GM13976 (cell line): ENCODE measurements at regions of chr20 and their contacts with region 1.

Region 1: DNA sequence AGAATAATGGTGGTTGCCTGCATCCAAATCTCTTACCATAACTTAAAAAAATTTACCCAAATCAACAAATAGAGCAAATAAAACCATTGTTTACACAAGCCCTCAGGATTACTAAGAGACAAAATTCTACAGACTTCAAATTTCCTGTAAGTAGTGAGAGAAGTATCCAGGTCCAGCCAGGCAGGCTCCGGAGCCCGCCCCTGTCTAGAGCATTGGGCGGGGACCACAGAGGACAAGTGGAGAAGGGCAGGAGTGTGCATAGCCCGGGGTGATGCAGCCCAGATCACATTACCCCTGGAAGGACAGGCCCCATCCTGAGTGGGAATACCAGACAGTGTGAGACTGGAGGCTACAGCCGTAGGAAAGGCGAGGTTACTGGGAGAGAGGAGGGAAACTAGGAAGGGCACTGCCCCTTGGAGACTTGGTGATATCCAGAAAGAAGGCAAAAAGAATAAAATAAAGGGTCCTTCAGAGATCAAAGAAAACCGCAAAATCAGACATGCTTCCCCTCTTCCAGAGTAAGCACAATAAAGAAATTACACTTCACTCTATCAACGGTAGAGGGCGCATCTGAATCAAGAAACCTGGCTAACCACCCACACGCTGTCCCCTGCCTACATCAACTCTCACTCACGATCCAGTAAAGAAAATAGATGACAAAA is 26.6 kb downstream of the RIN2 start:
- DNase-seq: peak; percentile 65
- CTCF ChIP-seq: peak; percentile 70

Region 2: GRCh38 chr20:19699180-19699971 is 85.3 kb before region 1 on chr20:
- in situ Hi-C with region 1: no loop called
- DNase-seq: no peak
- CTCF ChIP-seq: no peak

Region 3: GRCh38 chr20:19981031-19981451 is 196.4 kb after region 1 on chr20:
- in situ Hi-C with region 1: loop called (anchors 10 kb)
- DNase-seq: no peak
- CTCF ChIP-seq: no peak